ENCODE measurements at regions of chr16 and their contacts with region 1.

Region 1: GRCh38 chr16:20243731-20244281 is 83.5 kb downstream of the GP2 start:
- DNase-seq: no peak
- ATAC-seq: no peak
- H3K4me3 ChIP-seq: no peak overlapping the region
- H3K27ac ChIP-seq: no peak overlapping the region
- H3K4me1 ChIP-seq: no peaks in the 10 kb centered on the region
- H3K27me3 ChIP-seq: peaks cover 0 to 12% (median 7%) of the 10 kb centered on the region in 7 donors
- CTCF ChIP-seq: no peak

Region 2: GRCh38 chr16:20107095-20107494 is 136.7 kb before region 1 on chr16:
- intact Hi-C with region 1: no loop called
- DNase-seq: no peak
- ATAC-seq: no peak
- H3K4me3 ChIP-seq: no peak overlapping the region
- H3K27ac ChIP-seq: no peak overlapping the region
- H3K4me1 ChIP-seq: no peaks in the 10 kb centered on the region
- H3K27me3 ChIP-seq: peaks cover 0 to 35% (median 7%) of the 10 kb centered on the region in 7 donors
- CTCF ChIP-seq: no peak

Region 3: GRCh38 chr16:20216591-20217217 is 27.1 kb before region 1 on chr16:
- intact Hi-C with region 1: loop called in 1 of 10 experiments (anchors 2 kb)
- DNase-seq: no peak
- ATAC-seq: no peak
- H3K4me3 ChIP-seq: peak overlapping the region in 1 of 10 donors; percentile 8
- H3K27ac ChIP-seq: peak overlapping the region in 3 of 10 donors; percentile 23 to 57 (median 29)
- H3K4me1 ChIP-seq: peaks cover 0 to 4% (median 0%) of the 10 kb centered on the region in 9 donors
- H3K27me3 ChIP-seq: peaks cover 0 to 8% (median 0%) of the 10 kb centered on the region in 7 donors
- CTCF ChIP-seq: no peak

Measured in heart right ventricle (tissue), 16 donors.